ENCODE measurements at regions of chr3 and their contacts with region 1.

Region 1: GRCh38 chr3:149086232-149086988 is at the start of gene HLTF:
- DNase-seq: peak; percentile 97
- H3K4me3 ChIP-seq: peak within 1 kb of the TSS; percentile 73 to 80 (median 79)
- H3K27ac ChIP-seq: peak within 1 kb of the TSS; percentile 3
- H3K4me1 ChIP-seq: peaks cover 5% of the 10 kb centered on the region
- H3K27me3 ChIP-seq: no peaks in the 10 kb centered on the region
- CTCF ChIP-seq: no peak
- total RNA-seq, gene HLTF: 23.3 to 25.5 TPM

Region 2: GRCh38 chr3:148943506-148944205 is 142.8 kb before region 1 on chr3:
- CTCF ChIA-PET with region 1: no interaction called
- dilution Hi-C with region 1: no loop called
- in situ Hi-C with region 1: no loop called
- intact Hi-C with region 1: no loop called
- DNase-seq: peak; percentile 73
- H3K4me3 ChIP-seq: no peak overlapping the region
- H3K27ac ChIP-seq: no peak overlapping the region
- H3K4me1 ChIP-seq: no peaks in the 10 kb centered on the region
- H3K27me3 ChIP-seq: no peaks in the 10 kb centered on the region
- CTCF ChIP-seq: peak; percentile 67 to 73

Region 3: DNA sequence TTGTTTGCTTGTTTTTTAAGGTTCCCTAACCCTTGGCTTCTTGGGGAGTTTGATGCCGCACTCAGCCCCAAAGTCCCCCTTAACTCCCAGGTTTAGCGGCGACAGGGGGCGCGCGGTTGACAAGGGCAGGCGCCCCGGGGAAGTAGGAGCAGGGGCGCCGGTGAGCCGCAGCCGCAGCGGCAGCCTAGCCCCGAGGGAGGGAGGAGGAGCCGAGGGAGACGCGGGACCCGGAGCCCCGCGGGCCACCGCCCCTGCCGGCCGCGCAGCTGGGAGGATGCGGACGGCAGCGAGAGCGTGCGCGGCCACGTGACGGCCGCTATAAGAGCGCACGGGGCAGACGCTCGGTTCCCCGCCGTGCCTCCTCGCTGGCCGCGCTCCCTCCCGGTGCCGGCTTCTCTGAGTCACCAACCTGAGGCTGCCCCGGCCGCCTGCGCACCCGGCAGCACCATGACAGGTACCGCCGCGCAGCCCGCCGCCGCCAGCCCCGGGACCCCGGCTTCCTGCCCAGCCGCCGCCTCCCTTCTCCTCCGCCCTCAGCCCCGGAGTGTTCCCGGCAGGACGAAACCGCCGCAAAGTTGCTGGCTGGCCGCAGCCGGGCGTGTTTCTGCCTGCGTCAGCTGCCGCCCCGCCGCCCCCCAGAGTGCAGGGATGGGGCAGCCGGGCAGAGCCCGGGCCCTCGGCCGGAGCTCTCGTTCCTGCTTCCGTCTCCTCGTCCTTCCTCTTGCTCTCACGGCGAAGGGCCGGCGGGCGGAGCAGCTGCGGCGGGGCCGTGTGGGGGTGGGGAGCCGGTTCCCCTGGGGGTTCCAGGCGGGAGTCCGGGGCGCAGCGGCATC is 95.0 kb before region 1 on chr3 and contains the start of gene GYG1:
- CTCF ChIA-PET with region 1: no interaction called
- dilution Hi-C with region 1: no loop called
- in situ Hi-C with region 1: no loop called
- intact Hi-C with region 1: loop called (anchors 5 kb)
- DNase-seq: peak; percentile 79
- H3K4me3 ChIP-seq: peak within 1 kb of the TSS; percentile 78 to 85 (median 82)
- H3K27ac ChIP-seq: peak within 1 kb of the TSS; percentile 33
- H3K4me1 ChIP-seq: peaks cover 9% of the 10 kb centered on the region
- H3K27me3 ChIP-seq: no peaks in the 10 kb centered on the region
- CTCF ChIP-seq: peak in 1 of 2 donors; percentile 18
- total RNA-seq, gene GYG1: 23.5 to 30.5 TPM